ENCODE measurements at regions of chrX and their contacts with region 1.

Region 1: GRCh38 chrX:56729152-56729850 is at the start of gene NBDY:
- DNase-seq: peak in 11 of 14 experiments; percentile 3 to 66 (median 15)
- ATAC-seq: peak; percentile 80
- H3K4me3 ChIP-seq: peak within 1 kb of the TSS; percentile 82
- H3K4me3 Mint-ChIP-seq: peak within 1 kb of the TSS; percentile 96
- H3K27ac ChIP-seq: peak within 1 kb of the TSS; percentile 61 to 81
- H3K27ac Mint-ChIP-seq: peak within 1 kb of the TSS; percentile 92
- H3K4me1 ChIP-seq: peaks cover 4% of the 10 kb centered on the region
- H3K4me1 Mint-ChIP-seq: peaks cover 53% of the 10 kb centered on the region
- H3K27me3 ChIP-seq: no peaks in the 10 kb centered on the region
- H3K27me3 Mint-ChIP-seq: no peaks in the 10 kb centered on the region
- CTCF ChIP-seq: no peak
- total RNA-seq, gene NBDY: 25.0 to 28.3 TPM

Region 2: GRCh38 chrX:56462389-56462788 is 266.9 kb before region 1 on chrX:
- CTCF ChIA-PET with region 1: interaction called, 3 read pairs
- POLR2A ChIA-PET with region 1: no interaction called
- intact Hi-C with region 1: loop called (anchors 1 to 5 kb)
- DNase-seq: peak in 1 of 14 experiments; percentile 9
- ATAC-seq: no peak
- H3K4me3 ChIP-seq: no peak overlapping the region
- H3K4me3 Mint-ChIP-seq: no peak overlapping the region
- H3K27ac ChIP-seq: no peak overlapping the region
- H3K27ac Mint-ChIP-seq: no peak overlapping the region
- H3K4me1 ChIP-seq: no peaks in the 10 kb centered on the region
- H3K4me1 Mint-ChIP-seq: no peaks in the 10 kb centered on the region
- H3K27me3 ChIP-seq: no peaks in the 10 kb centered on the region
- H3K27me3 Mint-ChIP-seq: no peaks in the 10 kb centered on the region
- CTCF ChIP-seq: no peak

Region 3: GRCh38 chrX:56563231-56564161 is 165.8 kb before region 1 on chrX and contains the start of gene UBQLN2:
- CTCF ChIA-PET with region 1: interaction called, 3 read pairs
- POLR2A ChIA-PET with region 1: no interaction called
- intact Hi-C with region 1: loop called (anchors 5 kb)
- DNase-seq: peak; percentile 61 to 89 (median 74)
- ATAC-seq: peak; percentile 76
- H3K4me3 ChIP-seq: peak within 1 kb of the TSS; percentile 80
- H3K4me3 Mint-ChIP-seq: peak within 1 kb of the TSS; percentile 90
- H3K27ac ChIP-seq: peak within 1 kb of the TSS; percentile 80 to 89
- H3K27ac Mint-ChIP-seq: peak within 1 kb of the TSS; percentile 96
- H3K4me1 ChIP-seq: no peaks in the 10 kb centered on the region
- H3K4me1 Mint-ChIP-seq: peaks cover 39% of the 10 kb centered on the region
- H3K27me3 ChIP-seq: no peaks in the 10 kb centered on the region
- H3K27me3 Mint-ChIP-seq: no peaks in the 10 kb centered on the region
- CTCF ChIP-seq: no peak
- total RNA-seq, gene UBQLN2: 48.7 to 49.1 TPM

Region 4: DNA sequence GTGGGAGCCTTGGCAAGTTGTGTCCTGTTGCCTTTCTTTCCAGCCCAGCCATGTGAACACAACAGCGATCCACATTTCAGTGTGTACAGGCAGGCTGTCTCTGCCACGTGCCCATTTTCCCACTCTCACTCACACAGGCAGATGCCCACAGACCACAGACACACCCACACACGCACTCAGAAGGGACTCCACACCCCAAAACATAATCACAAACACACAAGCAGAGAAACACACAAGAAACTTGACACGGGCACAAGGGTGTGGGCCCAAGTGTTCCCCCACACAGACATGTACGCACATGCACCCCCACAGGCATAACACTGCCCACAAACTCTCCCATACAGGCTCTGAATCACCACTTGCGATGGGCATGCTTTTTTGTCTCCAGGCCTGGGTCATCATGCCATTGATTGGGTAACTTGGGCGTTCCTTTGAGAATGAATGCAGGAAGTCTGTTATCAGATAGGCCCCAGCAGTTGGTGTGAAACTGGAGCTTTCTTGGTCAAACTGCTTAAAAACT is 84.1 kb after region 1 on chrX:
- CTCF ChIA-PET with region 1: no interaction called
- POLR2A ChIA-PET with region 1: no interaction called
- intact Hi-C with region 1: no loop called
- DNase-seq: peak in 12 of 14 experiments; percentile 20 to 82 (median 43)
- ATAC-seq: peak; percentile 75
- H3K4me3 ChIP-seq: peak overlapping the region; percentile 46
- H3K4me3 Mint-ChIP-seq: peak overlapping the region; percentile 78
- H3K27ac ChIP-seq: peak overlapping the region; percentile 70 to 79
- H3K27ac Mint-ChIP-seq: peak overlapping the region; percentile 97
- H3K4me1 ChIP-seq: peaks cover 29% of the 10 kb centered on the region
- H3K4me1 Mint-ChIP-seq: peaks cover 57% of the 10 kb centered on the region
- H3K27me3 ChIP-seq: no peaks in the 10 kb centered on the region
- H3K27me3 Mint-ChIP-seq: no peaks in the 10 kb centered on the region
- CTCF ChIP-seq: no peak

Measured in CD4-positive, alpha-beta T cell (primary cell).